Common myeloid progenitor, CD34-positive (primary cell): ENCODE measurements at regions of chr7 and their contacts with region 1.

Region 1: DNA sequence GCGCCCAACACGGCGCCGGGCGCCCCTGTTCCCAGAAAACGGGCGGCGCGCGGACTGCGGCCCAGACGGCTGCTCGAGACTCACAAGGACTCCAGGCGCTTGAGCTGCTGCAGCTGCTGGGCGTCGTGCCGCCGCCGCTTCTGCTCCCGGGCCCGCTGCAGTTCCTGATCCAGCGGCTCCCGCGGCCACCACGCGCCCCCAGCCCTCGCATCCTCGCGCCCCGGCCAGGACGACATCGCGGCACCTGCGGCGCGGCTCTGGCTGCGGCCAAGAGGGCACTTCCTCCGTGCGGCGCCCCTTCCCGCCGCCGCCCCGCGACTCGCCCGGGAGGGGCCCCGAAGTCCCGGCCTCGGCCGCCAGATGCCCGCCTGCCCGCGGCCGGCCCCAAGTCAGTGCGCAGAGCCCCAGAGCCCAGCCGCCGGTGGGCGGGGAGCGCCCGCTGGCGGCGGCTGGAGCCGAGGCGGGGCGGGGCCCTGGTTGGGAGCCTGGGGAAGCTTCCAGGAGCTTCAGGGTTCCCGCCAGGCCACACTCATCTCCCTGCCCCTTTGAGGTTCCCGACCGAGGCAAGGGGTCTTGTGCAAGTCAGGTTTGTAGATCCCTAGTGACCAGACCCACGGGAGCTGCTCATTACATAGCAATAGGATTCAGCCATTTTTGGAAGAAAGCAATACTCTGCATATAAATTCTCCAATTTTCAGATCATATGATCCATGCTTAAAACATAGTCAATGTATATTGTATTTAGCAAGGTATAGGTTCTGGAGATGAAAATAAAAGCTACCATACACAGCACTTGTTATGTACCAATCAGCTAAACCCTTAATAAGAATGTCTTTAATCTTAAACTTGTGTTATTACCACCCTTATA is 14.2 kb upstream of the FKBP9 start:
- DNase-seq: peak; percentile 67 to 89 (median 78)
- H3K4me3 ChIP-seq: peak overlapping the region; percentile 57 to 93 (median 74)
- H3K27ac ChIP-seq: peak overlapping the region in 1 of 2 experiments; percentile 70
- H3K4me1 ChIP-seq: peaks cover 5 to 27% (median 19%) of the 10 kb centered on the region in 4 experiments
- H3K27me3 ChIP-seq: no peaks in the 10 kb centered on the region

Region 2: GRCh38 chr7:32802305-32802910 is 140.6 kb before region 1 on chr7:
- CTCF ChIA-PET with region 1: interaction called, 10 read pairs
- POLR2A ChIA-PET with region 1: no interaction called
- DNase-seq: no peak
- H3K4me3 ChIP-seq: no peak overlapping the region
- H3K27ac ChIP-seq: no peak overlapping the region
- H3K4me1 ChIP-seq: peaks cover 0 to 2% (median 0%) of the 10 kb centered on the region in 4 experiments
- H3K27me3 ChIP-seq: no peaks in the 10 kb centered on the region

Region 3: GRCh38 chr7:32891800-32892520 is 51.1 kb before region 1 on chr7:
- CTCF ChIA-PET with region 1: interaction called, 12 read pairs
- POLR2A ChIA-PET with region 1: interaction called, 8 read pairs
- DNase-seq: peak; percentile 94 to 97 (median 97)
- H3K4me3 ChIP-seq: peak overlapping the region; percentile 81 to 98 (median 92)
- H3K27ac ChIP-seq: peak overlapping the region; percentile 93 to 98
- H3K4me1 ChIP-seq: peaks cover 25 to 51% (median 32%) of the 10 kb centered on the region in 4 experiments
- H3K27me3 ChIP-seq: no peaks in the 10 kb centered on the region